GM12878 (cell line): ENCODE measurements at regions of chr4 and their contacts with region 1.

Region 1: GRCh38 chr4:129929052-129929451 is 833.1 kb downstream of the C4orf33 start:
- DNase-seq: no peak
- ATAC-seq: peak; percentile 82
- H3K4me3 ChIP-seq: no peak overlapping the region
- H3K27ac ChIP-seq: no peak overlapping the region
- H3K4me1 ChIP-seq: no peaks in the 10 kb centered on the region
- H3K27me3 ChIP-seq: no peaks in the 10 kb centered on the region
- CTCF ChIP-seq: peak; percentile 34 to 42 (median 39); a peak in 3 of 6 replicates
- EP300 ChIP-seq: no peak
- POLR2A ChIP-seq: no peak
- RAD21 ChIP-seq: peak; percentile 32; the same call in 1 of the 2 replicates

Region 2: DNA sequence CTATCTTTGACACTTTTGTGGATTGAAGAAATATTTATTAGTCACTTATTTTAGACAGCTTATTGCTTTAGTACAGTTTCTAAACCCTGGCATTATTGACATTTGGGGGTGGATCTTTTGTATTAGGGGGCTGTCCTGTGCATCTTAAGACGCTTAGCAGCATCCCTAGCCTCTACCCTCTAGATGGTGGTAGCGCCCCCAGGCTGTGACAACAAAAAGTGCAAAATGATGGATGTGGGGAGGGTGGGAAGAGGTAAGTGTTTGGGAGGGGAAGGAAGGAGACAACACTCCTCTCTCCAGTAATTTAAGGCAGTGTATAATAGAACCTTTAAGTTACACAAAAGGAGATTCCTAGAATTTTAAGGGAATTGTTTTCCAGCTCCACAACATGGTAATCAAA is 377.5 kb after region 1 on chr4:
- CTCF ChIA-PET with region 1: interaction called, 9 read pairs
- POLR2A ChIA-PET with region 1: no interaction called
- RAD21 ChIA-PET with region 1: interaction called, 4 read pairs
- SMC1A ChIA-PET with region 1: interaction called, 4 read pairs
- in situ Hi-C with region 1: loop called (anchors 10 kb)
- intact Hi-C with region 1: no loop called
- DNase-seq: no peak
- ATAC-seq: peak; percentile 55; the same call in 2 of the 3 replicates
- H3K4me3 ChIP-seq: no peak overlapping the region
- H3K27ac ChIP-seq: no peak overlapping the region
- H3K4me1 ChIP-seq: no peaks in the 10 kb centered on the region
- H3K27me3 ChIP-seq: no peaks in the 10 kb centered on the region
- CTCF ChIP-seq: peak in 2 of 3 experiments; percentile 12 to 25; a peak in 1 of 6 replicates
- EP300 ChIP-seq: no peak
- POLR2A ChIP-seq: no peak
- RAD21 ChIP-seq: 0 out of 2 replicates have a peak, but pooled peaks have one; percentile 7